ENCODE measurements at regions of chr11 and their contacts with region 1.

Region 1: GRCh38 chr11:13210424-13210823 is 67.2 kb upstream of the BMAL1 start:
- DNase-seq: peak; percentile 57
- ATAC-seq: peak; percentile 81
- H3K4me3 ChIP-seq: no peak overlapping the region
- H3K27ac ChIP-seq: no peak overlapping the region
- H3K4me1 ChIP-seq: peaks cover 20% of the 10 kb centered on the region
- H3K27me3 ChIP-seq: peaks cover 0 to 20% of the 10 kb centered on the region in 2 experiments; a peak in 3 of 5 replicates
- CTCF ChIP-seq: peak; percentile 73
- EP300 ChIP-seq: no peak
- POLR2A ChIP-seq: no peak
- RAD21 ChIP-seq: peak; percentile 46; the same call in 1 of the 2 replicates

Region 2: GRCh38 chr11:13061284-13061990 is 149.0 kb before region 1 on chr11:
- CTCF ChIA-PET with region 1: no interaction called
- POLR2A ChIA-PET with region 1: no interaction called
- in situ Hi-C with region 1: no loop called
- intact Hi-C with region 1: no loop called
- DNase-seq: no peak
- ATAC-seq: no peak
- H3K4me3 ChIP-seq: no peak overlapping the region
- H3K27ac ChIP-seq: no peak overlapping the region
- H3K4me1 ChIP-seq: peaks cover 15% of the 10 kb centered on the region
- H3K27me3 ChIP-seq: no peaks in the 10 kb centered on the region; a peak in 1 of 5 replicates
- CTCF ChIP-seq: no peak
- EP300 ChIP-seq: no peak
- POLR2A ChIP-seq: no peak
- RAD21 ChIP-seq: no peak

Region 3: GRCh38 chr11:13238879-13239514 is 28.6 kb after region 1 on chr11:
- CTCF ChIA-PET with region 1: interaction called, 12 read pairs
- POLR2A ChIA-PET with region 1: no interaction called
- in situ Hi-C with region 1: no loop called
- intact Hi-C with region 1: loop called (anchors 1 kb)
- DNase-seq: peak; percentile 35
- ATAC-seq: peak; percentile 80
- H3K4me3 ChIP-seq: no peak overlapping the region
- H3K27ac ChIP-seq: no peak overlapping the region
- H3K4me1 ChIP-seq: no peaks in the 10 kb centered on the region
- H3K27me3 ChIP-seq: peaks cover 2 to 3% of the 10 kb centered on the region in 2 experiments; a peak in 1 of 5 replicates
- CTCF ChIP-seq: peak; percentile 74
- EP300 ChIP-seq: no peak
- POLR2A ChIP-seq: no peak
- RAD21 ChIP-seq: no peak

Region 4: DNA sequence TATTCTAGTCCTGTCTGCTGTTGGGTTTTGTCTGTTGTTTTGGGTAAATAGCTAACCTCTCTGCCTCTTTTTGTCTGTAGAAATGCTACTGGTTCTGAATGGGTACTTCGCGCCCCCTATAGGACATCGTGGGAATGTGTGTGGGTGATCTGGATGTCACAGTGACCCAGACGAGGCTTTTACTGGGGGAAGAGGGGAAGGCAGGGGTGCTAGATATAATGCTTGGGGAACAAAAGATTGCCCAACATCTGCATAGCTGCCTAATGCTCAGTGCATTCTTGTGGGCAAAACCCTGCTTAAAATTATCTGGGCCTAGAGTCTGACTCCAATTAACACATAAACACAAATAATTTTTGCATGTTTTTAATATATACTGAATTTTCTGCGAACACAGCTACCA is 124.9 kb after region 1 on chr11:
- CTCF ChIA-PET with region 1: interaction called, 8 read pairs
- POLR2A ChIA-PET with region 1: no interaction called
- in situ Hi-C with region 1: loop called (anchors 5 kb)
- intact Hi-C with region 1: loop called (anchors 2 kb)
- DNase-seq: peak; percentile 49
- ATAC-seq: peak; percentile 71
- H3K4me3 ChIP-seq: no peak overlapping the region
- H3K27ac ChIP-seq: no peak overlapping the region
- H3K4me1 ChIP-seq: peaks cover 39% of the 10 kb centered on the region
- H3K27me3 ChIP-seq: no peaks in the 10 kb centered on the region; a peak in 1 of 5 replicates
- CTCF ChIP-seq: peak; percentile 81
- EP300 ChIP-seq: no peak
- POLR2A ChIP-seq: no peak
- RAD21 ChIP-seq: no peak

Region 5: DNA sequence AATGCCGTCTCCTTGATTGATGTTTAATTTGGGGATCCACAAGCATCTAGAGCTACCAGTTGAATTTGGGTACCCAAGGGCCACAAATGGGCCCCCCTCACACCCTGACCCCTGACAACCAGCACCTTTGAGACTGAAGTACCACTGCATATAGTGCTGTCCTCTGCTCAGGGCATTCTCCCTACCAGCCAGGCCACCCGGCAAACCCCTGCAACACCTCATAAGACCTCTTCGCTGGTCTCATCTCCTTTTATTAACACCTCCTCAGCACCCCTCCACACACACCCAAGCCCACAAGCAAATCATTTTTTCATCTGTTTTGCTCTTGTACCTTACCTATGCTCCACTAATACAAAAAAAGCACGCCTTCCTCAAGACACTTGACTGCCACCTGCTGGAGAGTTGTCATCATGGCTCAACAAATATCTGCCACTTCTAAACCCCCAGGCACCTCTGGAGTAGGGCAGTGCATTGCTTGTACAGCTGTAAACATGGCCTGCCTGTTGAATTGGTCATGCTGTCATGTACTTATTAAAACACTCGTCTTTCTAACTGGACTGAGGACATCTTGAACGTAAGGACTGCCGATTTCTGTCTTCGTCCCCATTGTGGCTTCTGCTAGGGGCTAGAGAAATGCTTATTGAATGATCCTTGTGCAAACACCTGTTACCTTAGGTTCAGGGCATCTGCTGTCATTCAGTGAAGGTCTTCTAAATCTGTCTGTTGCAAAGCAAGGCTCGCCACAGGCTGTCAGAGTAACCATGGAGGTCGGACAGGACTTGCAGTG is 133.7 kb after region 1 on chr11:
- CTCF ChIA-PET with region 1: interaction called, 16 read pairs
- POLR2A ChIA-PET with region 1: no interaction called
- in situ Hi-C with region 1: loop called (anchors 5 kb)
- intact Hi-C with region 1: loop called (anchors 1 kb)
- DNase-seq: peak; percentile 64
- ATAC-seq: peak; percentile 83
- H3K4me3 ChIP-seq: no peak overlapping the region
- H3K27ac ChIP-seq: no peak overlapping the region
- H3K4me1 ChIP-seq: no peaks in the 10 kb centered on the region
- H3K27me3 ChIP-seq: no peaks in the 10 kb centered on the region
- CTCF ChIP-seq: peak; percentile 83
- EP300 ChIP-seq: no peak
- POLR2A ChIP-seq: no peak
- RAD21 ChIP-seq: no peak

Region 6: DNA sequence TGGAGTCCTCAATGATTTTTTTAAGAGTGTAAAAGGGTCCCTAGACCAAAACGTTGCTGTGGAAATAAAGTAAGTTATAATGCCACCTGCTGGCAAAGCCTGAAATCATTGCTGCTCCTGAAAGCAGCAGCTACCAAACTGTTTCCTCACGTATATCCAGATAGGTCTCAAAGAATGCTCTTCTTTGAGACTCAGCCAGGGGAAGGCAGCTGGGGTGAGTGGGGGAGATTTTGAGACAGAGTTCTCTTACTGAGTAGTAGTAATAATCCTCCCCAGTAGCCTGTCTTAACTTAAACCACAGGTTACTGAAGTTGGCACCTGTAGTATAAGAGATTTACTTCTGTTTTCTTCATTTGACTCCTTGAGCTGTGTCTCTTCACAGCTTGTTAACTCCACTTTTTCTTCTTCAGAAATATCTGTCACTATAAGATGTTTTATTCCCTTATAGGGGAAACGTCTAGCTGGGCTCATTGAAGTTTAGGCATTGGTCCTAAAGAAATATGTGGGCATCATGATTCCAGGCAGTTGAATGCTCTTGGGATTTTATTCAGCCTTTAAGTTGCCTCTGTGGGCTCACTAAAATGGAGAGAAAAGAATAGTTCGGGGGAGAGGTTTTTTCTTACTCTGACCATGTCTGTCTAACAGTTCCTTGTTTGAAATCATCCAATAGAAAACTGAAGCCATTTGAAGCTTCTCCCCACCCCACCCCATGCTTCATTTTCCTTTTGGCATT is 174.7 kb after region 1 on chr11:
- CTCF ChIA-PET with region 1: interaction called, 5 read pairs
- POLR2A ChIA-PET with region 1: no interaction called
- in situ Hi-C with region 1: no loop called
- intact Hi-C with region 1: loop called (anchors 5 kb)
- DNase-seq: peak; percentile 25
- ATAC-seq: peak; percentile 62
- H3K4me3 ChIP-seq: no peak overlapping the region
- H3K27ac ChIP-seq: no peak overlapping the region
- H3K4me1 ChIP-seq: peaks cover 7% of the 10 kb centered on the region; the same call in 1 of the 2 replicates
- H3K27me3 ChIP-seq: no peaks in the 10 kb centered on the region
- CTCF ChIP-seq: peak; percentile 59
- EP300 ChIP-seq: no peak
- POLR2A ChIP-seq: no peak
- RAD21 ChIP-seq: no peak

Region 7: GRCh38 chr11:13462901-13463778 is 252.7 kb after region 1 on chr11 and contains the start of gene BTBD10:
- CTCF ChIA-PET with region 1: no interaction called
- POLR2A ChIA-PET with region 1: no interaction called
- in situ Hi-C with region 1: no loop called
- intact Hi-C with region 1: loop called (anchors 10 kb)
- DNase-seq: peak; percentile 89
- ATAC-seq: peak; percentile 99
- H3K4me3 ChIP-seq: peak within 1 kb of the TSS; percentile 82 to 88 (median 84)
- H3K27ac ChIP-seq: peak within 1 kb of the TSS; percentile 75
- H3K4me1 ChIP-seq: peaks cover 23% of the 10 kb centered on the region
- H3K27me3 ChIP-seq: no peaks in the 10 kb centered on the region; a peak in 1 of 5 replicates
- CTCF ChIP-seq: no peak
- EP300 ChIP-seq: no peak
- POLR2A ChIP-seq: peak; percentile 88 to 98
- RAD21 ChIP-seq: no peak
- total RNA-seq, gene BTBD10: 26.6 and 37.0 TPM in 2 replicates

Measured in HepG2 (cell line).